Caco-2 (cell line): ENCODE measurements at regions of chr10 and their contacts with region 1.

Region 1: GRCh38 chr10:86936661-86937501 is 20.5 kb downstream of the MMRN2 start:
- DNase-seq: no peak
- H3K4me3 ChIP-seq: no peak overlapping the region
- H3K4me3 Mint-ChIP-seq: no peak overlapping the region
- H3K27ac Mint-ChIP-seq: no peak overlapping the region
- H3K4me1 ChIP-seq: peaks cover 9% of the 10 kb centered on the region; the same call in 1 of the 2 replicates
- H3K4me1 Mint-ChIP-seq: no peaks in the 10 kb centered on the region
- H3K27me3 ChIP-seq: no peaks in the 10 kb centered on the region
- H3K27me3 Mint-ChIP-seq: no peaks in the 10 kb centered on the region
- CTCF ChIP-seq: no peak

Region 2: DNA sequence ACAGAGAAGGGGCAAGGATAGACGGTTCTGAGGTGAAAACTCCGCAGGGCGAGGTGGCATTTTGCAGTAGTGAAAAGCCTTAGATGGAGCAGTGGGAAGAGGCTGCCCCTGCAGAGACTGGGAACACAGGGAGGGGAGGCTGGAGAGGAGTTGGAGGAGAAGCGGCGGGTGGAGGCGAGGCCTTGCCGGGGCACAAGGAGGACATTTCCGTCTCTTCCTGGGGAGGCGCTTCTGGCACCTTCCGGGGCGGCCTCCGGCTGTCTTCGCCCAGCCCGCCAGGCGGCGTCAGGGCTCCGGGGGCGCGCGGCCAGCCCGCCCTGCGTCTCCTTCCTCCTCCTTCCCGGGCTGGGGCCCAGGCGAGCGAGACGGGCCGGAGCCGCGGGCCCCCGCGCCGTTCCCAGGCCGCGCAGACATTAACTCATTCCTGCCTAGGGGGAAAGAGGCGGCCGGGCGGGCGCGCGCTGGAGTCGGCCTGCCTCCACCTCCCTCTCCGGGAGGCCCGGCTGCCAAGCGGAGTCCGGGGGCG is 225.8 kb before region 1 on chr10:
- CTCF ChIA-PET with region 1: no interaction called
- POLR2A ChIA-PET with region 1: no interaction called
- intact Hi-C with region 1: loop called (anchors 1 kb)
- DNase-seq: peak; percentile 88 to 96
- H3K4me3 ChIP-seq: peak overlapping the region; percentile 70
- H3K4me3 Mint-ChIP-seq: peak overlapping the region; percentile 86
- H3K27ac Mint-ChIP-seq: peak overlapping the region; percentile 88
- H3K4me1 ChIP-seq: peaks cover 11% of the 10 kb centered on the region
- H3K4me1 Mint-ChIP-seq: peaks cover 7% of the 10 kb centered on the region
- H3K27me3 ChIP-seq: no peaks in the 10 kb centered on the region
- H3K27me3 Mint-ChIP-seq: no peaks in the 10 kb centered on the region
- CTCF ChIP-seq: peak; percentile 84

Region 3: DNA sequence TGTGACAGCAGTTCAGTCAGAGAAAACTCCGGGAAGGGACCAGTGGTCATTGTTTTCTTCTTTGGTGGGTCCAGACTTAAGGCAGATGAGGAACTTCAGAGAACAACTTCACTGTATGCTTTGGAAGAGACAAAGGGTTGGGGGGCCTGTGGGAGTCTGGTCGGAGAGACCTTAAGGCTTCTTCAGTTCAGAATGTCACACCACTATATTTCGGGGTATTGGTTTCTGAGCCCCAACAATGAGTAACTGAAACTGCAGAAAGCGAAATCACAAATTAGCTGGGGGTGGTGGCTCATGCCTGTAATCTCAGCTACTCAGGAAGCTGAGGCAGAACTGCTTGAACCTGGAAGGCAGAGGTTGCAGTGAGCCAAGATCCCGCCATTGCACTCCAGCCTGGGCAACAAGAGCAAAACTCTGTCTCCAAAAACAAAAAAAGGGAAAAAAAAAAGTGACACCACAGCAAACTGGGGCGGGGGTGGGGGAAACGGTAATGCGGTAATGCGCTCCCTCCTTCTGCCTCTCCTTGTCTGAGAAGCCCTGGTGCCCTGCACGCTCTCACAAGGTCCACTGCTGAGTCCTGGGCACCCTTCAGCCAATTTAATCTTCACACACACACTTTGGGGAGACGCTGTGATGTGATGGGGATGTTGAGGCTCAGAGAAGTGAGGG is 29.2 kb after region 1 on chr10:
- CTCF ChIA-PET with region 1: interaction called, 21 read pairs
- POLR2A ChIA-PET with region 1: no interaction called
- intact Hi-C with region 1: loop called (anchors 1 kb)
- DNase-seq: no peak
- H3K4me3 ChIP-seq: no peak overlapping the region
- H3K4me3 Mint-ChIP-seq: no peak overlapping the region
- H3K27ac Mint-ChIP-seq: peak overlapping the region; percentile 55
- H3K4me1 ChIP-seq: peaks cover 23% of the 10 kb centered on the region
- H3K4me1 Mint-ChIP-seq: peaks cover 15% of the 10 kb centered on the region
- H3K27me3 ChIP-seq: no peaks in the 10 kb centered on the region
- H3K27me3 Mint-ChIP-seq: no peaks in the 10 kb centered on the region
- CTCF ChIP-seq: no peak

Region 4: DNA sequence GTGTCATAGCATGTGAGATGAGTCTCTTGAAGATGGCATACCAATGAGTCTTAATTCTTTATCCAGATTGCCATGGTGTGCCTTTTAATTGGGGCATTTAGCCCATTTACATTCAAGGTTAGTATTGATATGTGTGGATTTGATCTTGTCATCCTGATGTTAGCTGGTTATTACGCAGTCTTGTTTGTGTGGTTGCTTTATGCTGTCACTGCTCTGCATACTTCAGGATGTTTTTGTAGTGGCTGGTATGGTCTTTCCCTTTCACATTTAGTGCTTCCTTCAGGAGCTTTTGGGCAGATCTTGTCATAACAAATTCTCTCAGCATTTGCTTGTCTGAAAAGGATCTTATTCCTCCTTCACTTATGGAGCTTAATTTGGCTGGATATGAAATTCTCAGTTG is 99.7 kb after region 1 on chr10:
- CTCF ChIA-PET with region 1: no interaction called
- POLR2A ChIA-PET with region 1: no interaction called
- intact Hi-C with region 1: no loop called
- DNase-seq: no peak
- H3K4me3 ChIP-seq: no peak overlapping the region
- H3K4me3 Mint-ChIP-seq: no peak overlapping the region
- H3K27ac Mint-ChIP-seq: no peak overlapping the region
- H3K4me1 ChIP-seq: no peaks in the 10 kb centered on the region
- H3K4me1 Mint-ChIP-seq: peaks cover 7% of the 10 kb centered on the region
- H3K27me3 ChIP-seq: no peaks in the 10 kb centered on the region
- H3K27me3 Mint-ChIP-seq: no peaks in the 10 kb centered on the region
- CTCF ChIP-seq: no peak